ENCODE measurements at regions of chr3 and their contacts with region 1.

Region 1: DNA sequence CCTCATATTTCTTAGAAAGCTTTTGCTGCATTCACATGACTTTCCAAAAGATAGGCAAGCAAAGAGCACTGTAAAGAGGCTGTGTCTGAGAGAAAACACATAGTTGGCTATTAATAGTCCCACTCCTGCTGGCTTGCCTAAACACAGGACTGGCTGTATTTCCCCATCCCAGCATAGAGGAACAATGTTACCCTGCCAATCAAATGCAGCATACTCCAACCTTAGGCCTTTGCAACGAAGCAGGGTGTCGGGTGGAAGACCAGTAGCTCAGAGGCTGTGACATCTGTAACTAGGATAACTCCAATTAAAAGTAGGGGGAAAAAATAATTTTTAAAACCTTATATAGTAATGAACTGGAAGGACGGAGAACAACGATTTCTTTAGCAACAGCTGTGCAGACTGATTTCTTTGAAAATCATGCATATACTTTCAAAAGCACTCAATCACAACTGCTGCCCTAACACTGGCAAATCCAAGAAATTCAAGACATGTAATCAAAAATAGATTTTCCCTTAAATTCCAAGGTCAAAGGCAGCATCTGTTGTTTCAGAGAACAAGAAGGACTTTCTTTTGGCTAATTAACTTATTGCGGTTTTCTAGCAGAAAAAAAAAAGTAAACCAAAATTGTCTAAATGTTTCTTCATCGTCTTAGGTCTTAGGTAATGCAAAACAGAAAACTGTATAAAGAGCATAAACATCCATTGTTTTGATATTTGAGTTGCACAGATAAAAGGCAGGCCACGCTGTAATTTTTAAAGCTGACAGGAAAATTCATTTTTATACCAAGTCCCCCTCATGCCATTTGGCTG is 139.3 kb downstream of the TNIK start:
- DNase-seq: no peak
- ATAC-seq: no peak
- H3K4me3 ChIP-seq: no peak overlapping the region
- H3K27ac ChIP-seq: peak overlapping the region; percentile 10; the same call in 1 of the 2 replicates
- H3K4me1 ChIP-seq: peaks cover 11% of the 10 kb centered on the region
- H3K27me3 ChIP-seq: no peaks in the 10 kb centered on the region
- CTCF ChIP-seq: no peak
- EP300 ChIP-seq: no peak
- POLR2A ChIP-seq: no peak
- RAD21 ChIP-seq: no peak

Region 2: GRCh38 chr3:170941551-170941950 is 379.4 kb before region 1 on chr3:
- CTCF ChIA-PET with region 1: no interaction called
- POLR2A ChIA-PET with region 1: no interaction called
- RAD21 ChIA-PET with region 1: no interaction called
- SMC1A ChIA-PET with region 1: no interaction called
- in situ Hi-C with region 1: no loop called
- intact Hi-C with region 1: no loop called
- DNase-seq: no peak
- ATAC-seq: no peak
- H3K4me3 ChIP-seq: no peak overlapping the region
- H3K27ac ChIP-seq: no peak overlapping the region
- H3K4me1 ChIP-seq: no peaks in the 10 kb centered on the region
- H3K27me3 ChIP-seq: peaks cover 0 to 2% of the 10 kb centered on the region in 2 experiments; a peak in 1 of 4 replicates
- CTCF ChIP-seq: no peak
- EP300 ChIP-seq: no peak
- POLR2A ChIP-seq: no peak
- RAD21 ChIP-seq: no peak

Region 3: DNA sequence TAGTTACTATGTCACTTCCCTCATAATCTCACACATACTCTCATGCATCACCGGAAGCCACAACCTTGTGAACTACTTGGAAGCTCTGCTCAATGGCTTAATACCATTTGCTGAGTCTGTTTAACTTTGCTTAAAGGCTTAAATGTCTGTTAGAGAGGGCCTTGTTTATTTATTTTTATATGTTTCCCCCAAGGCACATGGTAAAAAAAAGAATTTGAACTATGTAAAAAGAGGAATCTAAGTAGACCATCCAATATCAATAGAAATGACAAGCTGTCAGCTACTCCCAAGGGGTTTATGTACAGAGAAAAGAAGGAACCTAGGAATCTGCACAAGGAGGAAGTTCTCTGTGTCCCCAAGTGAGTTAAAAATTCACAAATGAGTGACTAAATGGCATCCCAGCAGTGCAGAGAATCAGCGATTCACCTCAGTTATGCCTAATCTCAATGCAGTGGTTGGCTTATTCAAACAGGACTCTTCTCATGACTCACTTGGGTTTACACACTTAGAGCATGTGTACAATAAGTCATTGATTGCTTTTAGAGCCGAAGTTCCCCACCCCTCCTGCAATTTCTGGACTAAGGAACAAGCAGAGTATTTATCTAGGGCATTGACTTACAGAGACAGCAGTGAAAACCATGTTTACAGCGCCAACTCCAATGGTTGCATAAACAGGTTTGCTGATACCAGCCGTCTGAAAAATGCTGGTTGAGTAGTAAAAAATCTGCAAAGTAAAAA is 318.8 kb before region 1 on chr3:
- CTCF ChIA-PET with region 1: no interaction called
- POLR2A ChIA-PET with region 1: no interaction called
- RAD21 ChIA-PET with region 1: no interaction called
- SMC1A ChIA-PET with region 1: no interaction called
- in situ Hi-C with region 1: no loop called
- intact Hi-C with region 1: no loop called
- DNase-seq: peak; percentile 13
- ATAC-seq: peak; percentile 90
- H3K4me3 ChIP-seq: no peak overlapping the region
- H3K27ac ChIP-seq: no peak overlapping the region
- H3K4me1 ChIP-seq: no peaks in the 10 kb centered on the region
- H3K27me3 ChIP-seq: no peaks in the 10 kb centered on the region
- CTCF ChIP-seq: no peak
- EP300 ChIP-seq: no peak; a peak in 1 of 4 replicates
- POLR2A ChIP-seq: no peak
- RAD21 ChIP-seq: no peak

Region 4: GRCh38 chr3:171038342-171039138 is 282.4 kb before region 1 on chr3:
- CTCF ChIA-PET with region 1: no interaction called
- POLR2A ChIA-PET with region 1: no interaction called
- RAD21 ChIA-PET with region 1: no interaction called
- SMC1A ChIA-PET with region 1: no interaction called
- in situ Hi-C with region 1: no loop called
- intact Hi-C with region 1: no loop called
- DNase-seq: no peak
- ATAC-seq: no peak
- H3K4me3 ChIP-seq: no peak overlapping the region
- H3K27ac ChIP-seq: no peak overlapping the region
- H3K4me1 ChIP-seq: no peaks in the 10 kb centered on the region
- H3K27me3 ChIP-seq: no peaks in the 10 kb centered on the region
- CTCF ChIP-seq: no peak
- EP300 ChIP-seq: no peak
- POLR2A ChIP-seq: no peak
- RAD21 ChIP-seq: no peak

Region 5: DNA sequence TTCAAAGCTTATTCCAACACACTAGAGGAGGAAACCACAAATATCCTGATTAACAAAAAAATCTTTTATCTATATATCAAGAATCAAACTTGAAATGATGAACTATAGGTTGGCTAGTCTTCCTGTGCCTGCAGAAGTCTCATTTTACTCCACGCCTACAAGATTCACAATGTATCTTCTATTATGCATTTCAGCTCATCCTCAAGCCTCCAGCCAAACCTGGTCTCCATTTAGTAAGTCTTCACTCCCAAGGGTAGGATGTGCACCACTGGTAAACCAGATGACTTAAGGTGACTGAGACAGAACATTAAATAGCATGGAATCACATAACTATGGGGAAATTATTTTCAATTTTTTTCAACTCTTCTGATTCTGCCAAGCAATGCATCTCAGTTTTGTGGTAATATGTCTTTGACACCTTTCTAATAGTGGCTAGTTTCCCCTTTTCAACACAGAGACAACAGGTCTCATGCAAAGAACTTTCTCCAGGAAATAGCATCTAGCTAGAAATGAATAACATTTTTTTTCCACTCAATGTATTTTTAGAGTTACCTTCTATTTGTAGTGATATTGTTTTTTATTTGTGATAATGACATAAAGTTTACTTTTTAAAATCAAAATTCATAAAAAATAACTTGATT is 27.7 kb before region 1 on chr3:
- CTCF ChIA-PET with region 1: interaction called, 3 read pairs
- POLR2A ChIA-PET with region 1: interaction called, 4 read pairs
- RAD21 ChIA-PET with region 1: interaction called, 7 read pairs
- SMC1A ChIA-PET with region 1: interaction called, 14 read pairs
- in situ Hi-C with region 1: no loop called
- intact Hi-C with region 1: no loop called
- DNase-seq: no peak
- ATAC-seq: peak; percentile 67
- H3K4me3 ChIP-seq: no peak overlapping the region
- H3K27ac ChIP-seq: peak overlapping the region; percentile 60
- H3K4me1 ChIP-seq: peaks cover 60% of the 10 kb centered on the region
- H3K27me3 ChIP-seq: no peaks in the 10 kb centered on the region
- CTCF ChIP-seq: no peak
- EP300 ChIP-seq: 0 out of 4 replicates have a peak, but pooled peaks have one; percentile 7 to 22
- POLR2A ChIP-seq: no peak
- RAD21 ChIP-seq: no peak

Region 6: DNA sequence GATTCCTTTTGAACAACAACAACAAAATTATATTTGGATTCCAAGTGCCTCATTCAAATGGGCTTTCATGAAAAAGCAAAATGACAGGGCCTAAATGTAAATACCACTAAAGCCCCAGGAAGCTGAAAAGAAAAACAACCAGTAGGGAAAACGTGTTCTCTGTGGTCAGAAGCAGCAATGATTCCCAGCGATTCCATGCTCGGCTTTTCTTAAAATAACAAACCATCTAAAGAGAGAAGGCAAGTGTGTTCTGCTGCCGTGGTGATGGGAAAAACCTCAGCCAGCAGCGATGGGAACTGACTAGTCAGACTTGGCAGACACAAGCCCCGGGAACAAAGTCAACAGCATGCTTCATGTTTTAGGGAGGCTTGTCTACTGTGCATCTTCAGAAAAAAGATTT is 14.3 kb before region 1 on chr3:
- CTCF ChIA-PET with region 1: interaction called, 16 read pairs
- POLR2A ChIA-PET with region 1: interaction called, 4 read pairs
- RAD21 ChIA-PET with region 1: interaction called, 6 read pairs
- SMC1A ChIA-PET with region 1: interaction called, 31 read pairs
- in situ Hi-C with region 1: no loop called
- intact Hi-C with region 1: no loop called
- DNase-seq: no peak
- ATAC-seq: peak; percentile 15
- H3K4me3 ChIP-seq: no peak overlapping the region
- H3K27ac ChIP-seq: peak overlapping the region; percentile 38; the same call in 1 of the 2 replicates
- H3K4me1 ChIP-seq: peaks cover 13% of the 10 kb centered on the region
- H3K27me3 ChIP-seq: no peaks in the 10 kb centered on the region
- CTCF ChIP-seq: no peak
- EP300 ChIP-seq: no peak
- POLR2A ChIP-seq: no peak
- RAD21 ChIP-seq: no peak

Measured in GM12878 (cell line).